Dorsolateral prefrontal cortex (tissue), 120 donors: ENCODE measurements at regions of chr12 and their contacts with region 1.

Region 1: GRCh38 chr12:56987551-56988053 is 18.7 kb downstream of the ZBTB39 start:
- DNase-seq: peak; percentile 73 to 89 (median 82)
- H3K4me3 ChIP-seq: peak overlapping the region in 4 of 59 donors; percentile 4 to 28 (median 13)
- H3K27ac ChIP-seq: peak overlapping the region in 12 of 59 donors; percentile 1 to 59 (median 25)
- H3K27me3 ChIP-seq: no peaks in the 10 kb centered on the region
- CTCF ChIP-seq: peak; percentile 74 to 98 (median 93)

Region 2: GRCh38 chr12:56751712-56752598 is 235.6 kb before region 1 on chr12 and contains the start of gene PRIM1:
- intact Hi-C with region 1: loop called in 1 of 2 experiments (anchors 1 kb)
- DNase-seq: peak; percentile 78 to 90 (median 83)
- H3K4me3 ChIP-seq: peak within 1 kb of the TSS; percentile 58 to 97 (median 81)
- H3K27ac ChIP-seq: peak within 1 kb of the TSS in 54 of 59 donors; percentile 4 to 89 (median 62)
- H3K27me3 ChIP-seq: no peaks in the 10 kb centered on the region
- CTCF ChIP-seq: peak in 52 of 56 donors; percentile 31 to 67 (median 50)
- total RNA-seq, gene PRIM1: 5.5 to 17.4 (median 10.2) TPM

Region 3: DNA sequence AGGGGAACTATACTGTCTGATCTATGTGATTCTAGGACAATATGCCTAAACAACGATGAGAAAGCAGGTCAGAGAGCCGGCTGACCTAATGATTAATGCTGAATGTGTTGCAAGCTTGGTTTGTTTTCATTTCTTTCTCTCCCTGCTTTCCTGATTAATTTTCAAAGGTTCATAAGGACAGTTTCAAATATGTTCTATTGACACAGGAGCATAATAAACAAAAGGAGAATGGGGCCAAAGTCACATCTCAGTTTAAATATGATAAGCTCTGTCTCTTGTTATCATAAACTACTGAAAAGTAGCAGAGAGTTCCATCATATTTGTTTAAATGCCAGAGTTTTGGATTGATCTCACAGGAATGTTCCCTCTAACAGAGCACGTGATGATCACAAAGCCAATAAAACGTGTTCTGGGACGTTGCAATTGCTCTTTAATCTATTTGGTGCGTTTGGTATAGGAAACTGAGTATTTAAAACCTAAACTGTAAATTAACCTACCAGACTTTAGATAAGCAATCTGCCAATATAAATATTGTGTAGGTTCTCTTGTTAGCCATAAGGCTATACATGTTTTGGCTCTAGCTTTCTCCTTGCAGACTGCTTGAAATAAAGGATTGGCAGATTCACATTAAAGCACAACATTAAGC is 228.2 kb before region 1 on chr12:
- intact Hi-C with region 1: loop called (anchors 1 to 2 kb)
- DNase-seq: no peak
- H3K4me3 ChIP-seq: no peak overlapping the region
- H3K27ac ChIP-seq: no peak overlapping the region
- H3K27me3 ChIP-seq: no peaks in the 10 kb centered on the region
- CTCF ChIP-seq: no peak

Region 4: DNA sequence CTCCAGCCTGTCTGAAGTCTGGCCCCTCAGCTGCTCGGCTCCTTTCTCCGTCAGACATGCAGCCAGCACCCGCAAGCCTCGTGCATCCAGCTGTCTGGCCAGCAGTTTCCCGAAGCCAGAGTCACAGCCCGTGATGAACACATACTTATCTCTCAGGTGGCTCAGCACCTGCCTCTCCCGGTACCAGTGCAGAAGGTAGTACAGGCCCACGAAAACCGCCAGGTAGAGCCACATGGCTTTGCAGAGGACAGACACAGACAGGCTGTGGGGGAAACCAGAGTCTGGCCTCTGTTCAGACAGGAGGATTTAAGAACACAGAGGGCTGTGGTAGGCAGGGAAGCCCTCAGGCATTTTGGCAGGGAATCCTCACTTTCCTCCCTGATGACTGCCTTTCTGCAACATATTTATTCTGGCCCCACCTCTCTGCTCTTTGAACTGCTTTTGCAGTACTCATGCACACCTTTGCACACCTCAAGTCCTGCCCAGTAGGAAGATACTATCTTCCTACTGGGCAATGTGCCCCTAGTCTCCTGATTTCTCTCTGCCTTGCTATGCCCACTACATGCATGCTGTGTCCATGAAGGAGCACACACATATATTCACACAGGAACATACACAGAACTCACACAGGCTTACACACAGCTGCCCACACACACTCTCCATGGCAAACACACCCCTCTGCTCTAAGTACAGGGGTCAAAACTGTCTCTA is 30.2 kb before region 1 on chr12 and contains the start of gene RDH16:
- intact Hi-C with region 1: no loop called
- DNase-seq: no peak
- H3K4me3 ChIP-seq: no peak within 1 kb of the TSS
- H3K27ac ChIP-seq: no peak within 1 kb of the TSS
- H3K27me3 ChIP-seq: no peaks in the 10 kb centered on the region
- CTCF ChIP-seq: no peak
- total RNA-seq, gene RDH16: 0.65 to 4.1 (median 1.6) TPM

Region 5: DNA sequence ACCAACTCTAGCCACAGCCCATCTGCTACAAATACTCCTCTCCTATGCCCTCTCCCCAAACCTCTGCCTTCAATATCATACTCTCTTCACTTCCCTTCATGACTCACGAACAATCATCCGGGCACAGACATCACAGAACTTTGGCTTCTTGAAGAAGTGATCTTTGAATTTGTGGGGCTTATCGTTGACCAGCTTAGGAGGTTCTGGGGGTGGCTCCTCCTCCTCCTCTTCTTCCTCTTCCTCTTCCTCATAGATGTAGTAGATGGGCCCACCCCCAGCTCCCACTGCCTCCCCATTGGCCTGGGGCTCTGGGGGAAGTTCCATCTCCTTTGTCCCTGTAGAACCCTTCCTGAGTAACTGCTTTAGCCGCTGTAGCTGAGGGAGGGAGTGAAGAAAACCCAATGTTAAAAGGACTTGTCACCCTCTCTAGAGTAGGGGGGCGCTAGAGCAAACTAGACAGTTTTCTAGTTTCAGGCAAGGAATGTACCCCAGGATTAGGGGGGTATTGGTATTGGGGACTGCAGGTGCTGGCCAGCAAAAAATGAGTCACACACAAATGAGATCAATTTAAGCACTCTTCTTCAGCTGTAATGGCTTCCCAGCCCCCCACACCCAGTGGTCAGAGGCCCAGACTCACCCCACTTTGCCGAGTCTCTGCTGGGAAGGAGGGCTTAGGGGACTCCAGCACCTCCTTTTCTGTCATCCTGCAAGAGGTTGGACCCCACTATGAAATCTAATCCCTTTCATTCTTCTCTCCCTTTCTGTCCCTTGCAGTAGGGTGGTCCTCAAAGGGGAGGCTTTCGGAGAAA is 261.5 kb after region 1 on chr12:
- intact Hi-C with region 1: no loop called
- DNase-seq: no peak
- H3K4me3 ChIP-seq: peak overlapping the region in 1 of 59 donors; percentile 24
- H3K27ac ChIP-seq: no peak overlapping the region
- H3K27me3 ChIP-seq: no peaks in the 10 kb centered on the region
- CTCF ChIP-seq: no peak